ENCODE measurements at regions of chr17 and their contacts with region 1.

Region 1: GRCh38 chr17:43779145-43780125 is 658 bp upstream of the DUSP3 start:
- DNase-seq: peak in 1 of 2 donors; percentile 92
- H3K4me3 ChIP-seq: no peak overlapping the region
- CTCF ChIP-seq: no peak
- POLR2A ChIP-seq: no peak

Region 2: GRCh38 chr17:43846221-43846712 is 66.8 kb after region 1 on chr17:
- intact Hi-C with region 1: loop called (anchors 10 kb)
- DNase-seq: peak; percentile 74 to 96
- H3K4me3 ChIP-seq: no peak overlapping the region
- CTCF ChIP-seq: peak in 1 of 3 donors; percentile 82
- POLR2A ChIP-seq: no peak

Measured in lower leg skin (tissue), 4 donors.